ENCODE measurements at regions of chr7 and their contacts with region 1.

Region 1: DNA sequence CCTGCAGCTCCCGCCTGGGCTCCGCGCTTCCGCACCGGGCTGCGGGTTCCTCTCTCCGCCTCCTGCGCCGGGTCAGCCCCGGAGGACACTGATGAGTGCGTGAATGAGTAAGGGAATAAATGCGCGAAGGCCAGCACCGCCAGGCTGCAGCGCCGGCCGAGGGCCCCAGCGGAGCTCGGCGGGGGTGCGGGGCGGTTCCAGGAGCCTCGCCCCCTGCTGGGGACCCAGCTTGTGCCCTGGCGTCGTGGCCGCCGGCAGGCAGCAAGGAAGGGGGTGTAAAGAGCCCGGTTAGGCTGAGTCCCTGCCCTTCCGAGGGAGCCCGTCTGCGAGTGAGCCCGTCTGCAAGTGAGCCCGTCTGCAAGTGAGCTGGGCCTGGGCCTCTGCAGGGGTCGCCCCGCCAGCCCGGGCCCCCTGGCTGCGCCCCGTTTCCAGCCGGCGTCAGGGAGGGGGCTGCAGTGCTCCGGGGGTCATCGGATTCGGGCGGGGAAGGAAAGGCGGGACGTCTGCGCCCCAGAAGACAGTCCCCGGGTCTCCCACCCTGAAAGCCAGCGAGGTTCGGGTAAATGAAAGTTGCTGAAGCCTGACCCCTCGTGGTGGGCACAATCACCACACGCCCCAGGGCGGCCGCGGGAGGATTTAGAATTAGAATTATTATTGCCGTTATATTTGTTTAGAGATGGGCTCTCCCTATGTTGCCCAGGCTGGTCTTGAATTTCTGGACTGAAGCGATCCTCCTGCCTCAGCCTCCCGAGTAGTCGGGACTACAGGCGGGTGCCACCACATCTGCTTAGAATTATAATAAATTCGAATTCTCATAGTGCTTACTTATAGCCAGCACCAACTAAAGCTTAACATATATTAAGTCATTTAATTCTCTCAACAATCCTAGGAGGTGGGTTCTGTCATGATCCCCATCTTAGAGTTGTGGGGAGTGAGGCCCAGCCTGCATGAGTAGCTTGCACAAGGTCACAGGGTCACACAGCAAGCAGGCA is 8.6 kb upstream of the CRYGN start:
- DNase-seq: peak in 1 of 2 experiments; percentile 90
- H3K4me3 ChIP-seq: peak overlapping the region; percentile 20 to 62 (median 44)
- H3K27ac ChIP-seq: no peak overlapping the region
- H3K4me1 ChIP-seq: peaks cover 0 to 16% (median 7%) of the 10 kb centered on the region in 4 experiments; a peak in 5 of 7 replicates
- H3K27me3 ChIP-seq: peaks cover 0 to 12% (median 7%) of the 10 kb centered on the region in 4 experiments; a peak in 5 of 7 replicates
- CTCF ChIP-seq: peak; percentile 80 to 85 (median 83)
- EP300 ChIP-seq: no peak
- POLR2A ChIP-seq: no peak
- RAD21 ChIP-seq: peak; percentile 81 to 82

Region 2: GRCh38 chr7:151291206-151291605 is 157.4 kb before region 1 on chr7:
- CTCF ChIA-PET with region 1: no interaction called
- POLR2A ChIA-PET with region 1: no interaction called
- DNase-seq: no peak
- H3K4me3 ChIP-seq: no peak overlapping the region
- H3K27ac ChIP-seq: no peak overlapping the region
- H3K4me1 ChIP-seq: no peaks in the 10 kb centered on the region
- H3K27me3 ChIP-seq: peaks cover 0 to 3% (median 1%) of the 10 kb centered on the region in 4 experiments; a peak in 4 of 7 replicates
- CTCF ChIP-seq: no peak
- EP300 ChIP-seq: no peak
- POLR2A ChIP-seq: no peak
- RAD21 ChIP-seq: no peak

Region 3: GRCh38 chr7:151361193-151361959 is 87.2 kb before region 1 on chr7:
- CTCF ChIA-PET with region 1: interaction called, 185 read pairs
- POLR2A ChIA-PET with region 1: interaction called, 3 read pairs
- DNase-seq: no peak
- H3K4me3 ChIP-seq: no peak overlapping the region
- H3K27ac ChIP-seq: no peak overlapping the region
- H3K4me1 ChIP-seq: no peaks in the 10 kb centered on the region
- H3K27me3 ChIP-seq: no peaks in the 10 kb centered on the region
- CTCF ChIP-seq: no peak
- EP300 ChIP-seq: no peak
- POLR2A ChIP-seq: no peak
- RAD21 ChIP-seq: no peak

Region 4: GRCh38 chr7:151386301-151387132 is 62.0 kb before region 1 on chr7:
- CTCF ChIA-PET with region 1: interaction called, 185 read pairs
- POLR2A ChIA-PET with region 1: no interaction called
- DNase-seq: no peak
- H3K4me3 ChIP-seq: no peak overlapping the region
- H3K27ac ChIP-seq: no peak overlapping the region
- H3K4me1 ChIP-seq: peaks cover 0 to 13% (median 4%) of the 10 kb centered on the region in 4 experiments; a peak in 6 of 7 replicates
- H3K27me3 ChIP-seq: peaks cover 8 to 26% (median 21%) of the 10 kb centered on the region in 4 experiments
- CTCF ChIP-seq: no peak
- EP300 ChIP-seq: no peak
- POLR2A ChIP-seq: no peak
- RAD21 ChIP-seq: no peak

Region 5: GRCh38 chr7:151408839-151409666 is 39.5 kb before region 1 on chr7:
- CTCF ChIA-PET with region 1: interaction called, 17 read pairs
- POLR2A ChIA-PET with region 1: interaction called, 3 read pairs
- DNase-seq: peak in 1 of 2 experiments; percentile 75
- H3K4me3 ChIP-seq: peak overlapping the region; percentile 69 to 84 (median 80)
- H3K27ac ChIP-seq: no peak overlapping the region
- H3K4me1 ChIP-seq: peaks cover 0 to 22% (median 16%) of the 10 kb centered on the region in 4 experiments; a peak in 6 of 7 replicates
- H3K27me3 ChIP-seq: peaks cover 0 to 25% (median 15%) of the 10 kb centered on the region in 4 experiments; a peak in 5 of 7 replicates
- CTCF ChIP-seq: no peak
- EP300 ChIP-seq: no peak
- POLR2A ChIP-seq: peak in 1 of 2 experiments; percentile 37; a peak in 2 of 3 replicates
- RAD21 ChIP-seq: no peak

Region 6: DNA sequence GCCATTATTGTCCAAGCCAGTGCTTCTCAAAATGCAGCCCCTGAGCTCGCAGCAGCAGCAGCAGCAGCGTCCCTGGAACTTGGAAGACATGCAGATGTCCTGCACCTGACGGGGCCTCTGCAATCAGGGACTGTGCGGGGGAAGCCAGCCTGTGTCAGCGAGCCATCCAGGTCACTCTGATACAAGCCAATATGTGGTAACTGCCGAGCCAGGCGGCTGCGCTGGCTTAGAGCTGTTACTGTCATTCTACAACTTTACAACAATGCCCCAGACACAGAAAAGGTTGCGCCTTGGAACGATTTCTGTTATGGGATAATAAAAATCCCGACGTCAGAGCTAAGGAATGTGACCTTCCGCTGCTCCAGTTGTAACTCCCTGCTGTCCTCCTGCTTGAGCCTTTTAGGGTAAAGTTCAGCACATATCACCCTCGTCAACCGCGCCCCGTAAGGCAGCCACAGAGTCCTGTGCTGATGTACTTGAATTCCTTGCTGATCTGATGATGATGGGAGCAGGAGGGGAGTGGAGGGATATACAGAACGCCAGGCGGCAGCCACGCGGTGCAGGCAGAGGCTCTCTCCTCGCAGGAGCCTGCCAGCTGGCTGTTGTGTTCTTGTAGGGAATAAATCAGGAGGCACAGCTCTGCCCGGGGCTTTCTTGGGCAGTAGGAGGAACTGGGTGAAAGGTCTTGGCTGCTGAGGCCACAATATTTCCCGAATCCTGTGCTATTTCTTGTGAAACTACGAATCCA is 11.3 kb after region 1 on chr7:
- CTCF ChIA-PET with region 1: interaction called, 49 read pairs
- POLR2A ChIA-PET with region 1: interaction called, 11 read pairs
- DNase-seq: peak in 1 of 2 experiments; percentile 67
- H3K4me3 ChIP-seq: peak overlapping the region in 1 of 4 experiments; percentile 4; a peak in 1 of 8 replicates
- H3K27ac ChIP-seq: no peak overlapping the region; the same call in 1 of the 2 replicates
- H3K4me1 ChIP-seq: peaks cover 14 to 36% (median 25%) of the 10 kb centered on the region in 4 experiments
- H3K27me3 ChIP-seq: no peaks in the 10 kb centered on the region
- CTCF ChIP-seq: no peak
- EP300 ChIP-seq: no peak
- POLR2A ChIP-seq: no peak; a peak in 1 of 3 replicates
- RAD21 ChIP-seq: no peak

Region 7: DNA sequence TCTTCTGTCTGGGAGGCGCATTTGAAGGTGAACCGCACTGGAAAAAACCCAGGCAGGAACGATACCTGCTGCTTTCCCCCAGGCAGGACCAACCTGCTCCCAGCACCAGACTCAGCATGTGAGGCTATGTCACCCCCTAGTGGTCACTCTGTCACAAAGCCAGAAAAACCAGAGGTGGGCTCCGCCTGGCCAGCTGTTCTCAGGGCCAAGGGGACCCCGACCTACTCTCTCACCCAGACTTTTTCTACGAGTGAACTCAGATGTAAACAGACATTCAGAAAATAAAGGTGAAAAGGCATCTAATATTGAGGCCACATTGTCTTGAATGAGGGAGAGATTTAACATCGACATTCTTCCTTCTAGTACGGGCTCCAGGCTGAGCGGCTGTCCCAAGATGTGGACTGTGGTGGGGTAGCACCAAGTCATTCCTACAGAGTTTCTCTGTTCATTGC is 311.1 kb after region 1 on chr7:
- CTCF ChIA-PET with region 1: interaction called, 14 read pairs
- POLR2A ChIA-PET with region 1: no interaction called
- DNase-seq: peak; percentile 49 to 81
- H3K4me3 ChIP-seq: no peak overlapping the region
- H3K27ac ChIP-seq: no peak overlapping the region
- H3K4me1 ChIP-seq: peaks cover 2 to 10% (median 7%) of the 10 kb centered on the region in 4 experiments; a peak in 6 of 7 replicates
- H3K27me3 ChIP-seq: peaks cover 0 to 10% (median 5%) of the 10 kb centered on the region in 4 experiments; a peak in 4 of 7 replicates
- CTCF ChIP-seq: peak; percentile 82 to 92 (median 92)
- EP300 ChIP-seq: no peak
- POLR2A ChIP-seq: no peak
- RAD21 ChIP-seq: peak; percentile 95 to 96

Measured in H1 (cell line).